Caco-2 (cell line): ENCODE measurements at regions of chr15 and their contacts with region 1.

Region 1: DNA sequence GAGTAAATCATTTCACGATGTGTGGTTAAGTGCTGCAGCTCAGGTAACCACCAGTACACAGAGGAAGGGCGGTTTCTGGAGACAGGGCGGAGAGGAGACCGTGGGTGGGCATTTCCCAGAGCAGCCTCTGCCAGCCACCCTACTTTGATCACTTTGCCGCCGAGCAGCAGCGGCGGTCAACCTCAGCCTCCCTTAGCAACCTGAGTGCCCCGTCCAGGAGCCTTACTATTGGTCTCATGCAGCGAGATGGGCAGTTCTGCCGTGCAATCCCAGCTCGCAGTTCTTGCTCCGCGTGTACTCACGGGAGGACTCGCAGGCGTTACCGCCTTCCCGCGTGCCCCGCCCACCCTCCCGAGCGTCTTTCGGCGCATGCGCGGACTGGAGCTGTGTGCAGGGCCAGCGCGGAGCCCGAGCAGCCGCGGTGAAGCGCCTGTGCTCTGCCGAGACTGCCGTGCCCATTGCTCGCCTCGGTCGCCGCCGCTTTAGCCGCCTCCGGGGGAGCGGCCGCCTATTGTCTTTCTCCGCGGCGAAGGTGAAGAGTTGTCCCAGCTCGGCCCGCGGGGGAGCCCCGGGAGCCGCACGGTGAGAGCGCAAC is at the start of gene AKAP13:
- DNase-seq: peak; percentile 95 to 99
- H3K4me3 ChIP-seq: peak within 1 kb of the TSS; percentile 69
- H3K4me3 Mint-ChIP-seq: peak within 1 kb of the TSS; percentile 74
- H3K27ac Mint-ChIP-seq: peak within 1 kb of the TSS; percentile 43
- H3K4me1 ChIP-seq: peaks cover 11% of the 10 kb centered on the region
- H3K4me1 Mint-ChIP-seq: peaks cover 26% of the 10 kb centered on the region
- H3K27me3 ChIP-seq: no peaks in the 10 kb centered on the region
- H3K27me3 Mint-ChIP-seq: no peaks in the 10 kb centered on the region
- CTCF ChIP-seq: no peak
- total RNA-seq, gene AKAP13: 48.3 and 49.6 TPM in 2 replicates

Region 2: GRCh38 chr15:85330901-85331588 is 49.3 kb before region 1 on chr15:
- CTCF ChIA-PET with region 1: interaction called, 8 read pairs
- POLR2A ChIA-PET with region 1: interaction called, 12 read pairs
- intact Hi-C with region 1: loop called (anchors 2 kb)
- DNase-seq: peak; percentile 77 to 82
- H3K4me3 ChIP-seq: no peak overlapping the region
- H3K4me3 Mint-ChIP-seq: no peak overlapping the region
- H3K27ac Mint-ChIP-seq: peak overlapping the region; percentile 81
- H3K4me1 ChIP-seq: peaks cover 47% of the 10 kb centered on the region
- H3K4me1 Mint-ChIP-seq: peaks cover 15% of the 10 kb centered on the region
- H3K27me3 ChIP-seq: no peaks in the 10 kb centered on the region
- H3K27me3 Mint-ChIP-seq: no peaks in the 10 kb centered on the region
- CTCF ChIP-seq: peak; percentile 42 to 61

Region 3: DNA sequence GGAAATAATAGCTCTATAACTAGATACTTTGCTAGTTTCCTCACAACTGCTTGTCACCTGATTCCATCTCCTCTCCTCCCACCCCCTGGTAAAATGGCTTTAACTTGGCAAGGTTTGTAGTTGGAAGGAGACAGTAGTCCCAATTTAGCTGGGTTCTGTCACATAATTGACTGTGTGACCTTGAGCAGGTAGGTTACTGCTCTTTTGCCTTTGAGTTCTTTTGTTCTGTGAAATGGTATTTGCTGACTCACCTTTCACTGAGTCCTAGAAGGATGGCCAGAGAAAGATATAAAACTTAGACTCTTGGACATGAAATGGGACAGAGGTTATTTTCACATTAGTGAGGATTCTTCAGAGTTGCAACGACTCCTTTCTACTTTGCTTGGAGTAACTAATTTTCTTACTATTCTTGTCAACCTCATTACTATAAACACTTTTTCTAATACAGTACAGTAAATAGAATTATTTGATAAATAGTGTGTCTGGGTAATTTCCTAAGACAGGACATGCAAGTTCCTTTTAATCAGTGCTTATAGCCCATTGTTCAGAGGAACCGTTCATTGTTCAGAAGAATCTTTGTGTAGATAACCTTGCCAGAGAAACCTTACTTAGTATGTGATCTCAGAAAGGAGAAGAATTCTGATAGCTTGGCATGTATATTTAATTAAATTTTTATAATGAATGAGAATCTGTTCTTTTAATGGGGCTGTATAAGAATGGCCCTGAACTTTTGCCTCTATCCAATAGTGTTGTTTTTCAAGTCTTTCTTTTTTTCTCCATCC is 14.4 kb after region 1 on chr15:
- CTCF ChIA-PET with region 1: no interaction called
- POLR2A ChIA-PET with region 1: interaction called, 3 read pairs
- intact Hi-C with region 1: loop called (anchors 2 kb)
- DNase-seq: no peak
- H3K4me3 ChIP-seq: no peak overlapping the region
- H3K4me3 Mint-ChIP-seq: no peak overlapping the region
- H3K27ac Mint-ChIP-seq: no peak overlapping the region
- H3K4me1 ChIP-seq: peaks cover 27% of the 10 kb centered on the region
- H3K4me1 Mint-ChIP-seq: peaks cover 28% of the 10 kb centered on the region
- H3K27me3 ChIP-seq: no peaks in the 10 kb centered on the region
- H3K27me3 Mint-ChIP-seq: no peaks in the 10 kb centered on the region
- CTCF ChIP-seq: no peak

Region 4: GRCh38 chr15:85404918-85405866 is 24.9 kb after region 1 on chr15:
- CTCF ChIA-PET with region 1: no interaction called
- POLR2A ChIA-PET with region 1: interaction called, 10 read pairs
- intact Hi-C with region 1: no loop called
- DNase-seq: no peak
- H3K4me3 ChIP-seq: no peak overlapping the region
- H3K4me3 Mint-ChIP-seq: no peak overlapping the region
- H3K27ac Mint-ChIP-seq: peak overlapping the region; percentile 42
- H3K4me1 ChIP-seq: peaks cover 17% of the 10 kb centered on the region
- H3K4me1 Mint-ChIP-seq: peaks cover 24% of the 10 kb centered on the region
- H3K27me3 ChIP-seq: no peaks in the 10 kb centered on the region
- H3K27me3 Mint-ChIP-seq: no peaks in the 10 kb centered on the region
- CTCF ChIP-seq: no peak

Region 5: DNA sequence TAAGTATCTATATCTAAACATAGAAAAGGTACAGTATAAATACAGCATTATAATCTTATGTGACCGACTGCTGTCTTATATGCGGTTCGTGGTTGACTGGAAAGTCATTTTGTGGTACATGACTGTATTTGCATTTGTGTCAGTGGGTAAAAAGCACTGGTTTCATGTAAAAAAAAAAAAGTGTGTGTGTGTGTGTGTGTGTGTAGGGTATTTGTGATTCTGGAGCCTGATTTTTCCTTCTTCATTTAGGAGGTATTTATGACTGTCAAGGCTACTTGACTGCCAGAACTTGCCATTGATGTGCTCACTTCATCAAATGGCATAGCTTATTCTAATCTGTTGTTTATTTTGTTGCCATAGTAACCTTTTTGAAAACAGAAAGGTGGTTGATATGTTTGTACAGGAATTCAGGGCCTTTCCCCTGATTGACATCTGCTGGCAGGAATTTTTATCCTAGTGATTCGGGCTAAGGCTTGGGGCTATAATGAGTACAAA is 63.3 kb after region 1 on chr15:
- CTCF ChIA-PET with region 1: interaction called, 7 read pairs
- POLR2A ChIA-PET with region 1: interaction called, 9 read pairs
- intact Hi-C with region 1: loop called (anchors 2 kb)
- DNase-seq: peak; percentile 68 to 77
- H3K4me3 ChIP-seq: no peak overlapping the region
- H3K4me3 Mint-ChIP-seq: peak overlapping the region; percentile 32
- H3K27ac Mint-ChIP-seq: peak overlapping the region; percentile 88
- H3K4me1 ChIP-seq: peaks cover 28% of the 10 kb centered on the region
- H3K4me1 Mint-ChIP-seq: peaks cover 36% of the 10 kb centered on the region
- H3K27me3 ChIP-seq: no peaks in the 10 kb centered on the region
- H3K27me3 Mint-ChIP-seq: no peaks in the 10 kb centered on the region
- CTCF ChIP-seq: peak in 1 of 2 experiments; percentile 47

Region 6: DNA sequence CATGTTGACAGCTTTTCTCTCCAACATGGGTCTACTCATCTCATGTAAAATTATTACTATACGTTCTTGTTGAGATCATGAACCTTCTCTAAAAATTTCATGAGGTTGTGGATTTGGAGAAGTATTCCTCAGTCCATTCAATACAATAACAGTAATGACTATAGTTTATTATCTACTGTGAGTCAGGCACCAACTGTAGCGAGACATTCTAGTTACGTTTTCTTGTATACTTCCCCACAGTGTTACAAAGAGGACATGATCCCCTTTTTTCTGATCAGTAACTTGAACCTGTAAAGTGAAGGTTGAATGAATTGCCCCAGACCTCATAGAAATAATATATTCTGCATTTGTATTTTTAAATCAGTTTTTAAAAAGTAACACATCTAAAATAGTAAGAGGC is 76.5 kb after region 1 on chr15:
- CTCF ChIA-PET with region 1: no interaction called
- POLR2A ChIA-PET with region 1: no interaction called
- intact Hi-C with region 1: no loop called
- DNase-seq: no peak
- H3K4me3 ChIP-seq: no peak overlapping the region
- H3K4me3 Mint-ChIP-seq: no peak overlapping the region
- H3K27ac Mint-ChIP-seq: no peak overlapping the region
- H3K4me1 ChIP-seq: peaks cover 29% of the 10 kb centered on the region
- H3K4me1 Mint-ChIP-seq: peaks cover 24% of the 10 kb centered on the region
- H3K27me3 ChIP-seq: no peaks in the 10 kb centered on the region
- H3K27me3 Mint-ChIP-seq: no peaks in the 10 kb centered on the region
- CTCF ChIP-seq: no peak